ENCODE measurements at regions of chr7 and their contacts with region 1.

Region 1: DNA sequence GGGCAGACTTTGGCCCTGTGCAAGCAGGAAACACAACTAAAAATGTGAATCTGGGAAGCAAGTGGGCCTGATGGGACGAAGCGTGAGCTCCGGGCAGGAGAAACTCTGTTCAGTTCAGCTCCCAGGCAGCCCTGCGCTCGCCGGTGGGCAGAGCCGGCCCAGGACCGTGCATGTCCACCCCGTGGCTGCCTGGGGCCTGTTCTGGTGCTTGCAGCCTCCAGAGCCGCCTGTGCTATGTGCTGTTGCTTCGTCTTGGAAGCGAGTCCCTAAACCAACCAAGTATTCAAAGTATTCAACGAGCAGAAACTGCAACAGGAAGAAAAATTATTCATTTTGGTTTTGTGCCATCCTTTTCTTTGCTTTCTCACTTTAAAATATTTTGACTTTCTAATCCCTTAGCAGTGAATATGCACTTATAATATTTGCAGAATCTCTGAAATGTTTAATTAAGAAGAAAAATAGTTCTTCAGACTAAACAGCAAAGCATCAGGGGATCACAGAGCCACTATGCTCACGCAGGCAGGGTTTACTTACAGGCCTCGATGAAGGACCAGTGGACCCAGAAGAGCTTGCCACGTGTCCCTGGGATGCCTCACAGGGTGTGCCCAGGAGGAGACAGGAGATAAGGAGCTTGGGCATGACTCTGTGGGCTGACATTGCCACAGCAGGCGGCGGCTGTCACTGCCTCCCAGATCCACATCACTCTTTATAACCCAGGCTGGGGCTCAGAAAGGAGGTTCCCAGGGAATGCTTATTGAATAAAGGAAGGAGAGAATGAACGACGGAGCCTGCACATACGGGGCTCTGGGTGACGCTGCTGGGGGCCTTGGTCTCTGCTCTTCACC is 45.6 kb downstream of the VIPR2 start:
- DNase-seq: no peak
- ATAC-seq: no peak

Region 2: DNA sequence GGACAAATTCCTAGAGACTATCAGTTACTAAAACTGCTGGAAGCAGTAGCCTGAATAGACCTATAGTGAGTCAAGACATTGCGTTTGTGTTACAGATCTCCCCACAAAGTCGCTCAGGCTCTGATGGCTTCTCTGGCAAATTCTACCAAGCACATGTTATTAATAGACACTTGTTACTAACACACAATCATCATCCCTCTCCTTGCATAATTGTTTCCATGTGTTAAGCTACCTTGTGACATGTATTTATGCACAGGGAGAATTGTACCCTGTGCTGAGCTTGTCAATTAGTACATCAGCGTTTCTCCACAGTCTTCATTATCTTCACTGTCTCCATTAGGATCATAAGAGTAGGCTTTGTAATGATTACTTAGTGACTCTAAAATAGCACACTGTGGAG is 211.4 kb before region 1 on chr7:
- intact Hi-C with region 1: no loop called
- DNase-seq: no peak
- ATAC-seq: peak; percentile 87

Region 3: GRCh38 chr7:158950914-158951635 is 148.0 kb before region 1 on chr7:
- intact Hi-C with region 1: no loop called
- DNase-seq: no peak
- ATAC-seq: no peak

Region 4: DNA sequence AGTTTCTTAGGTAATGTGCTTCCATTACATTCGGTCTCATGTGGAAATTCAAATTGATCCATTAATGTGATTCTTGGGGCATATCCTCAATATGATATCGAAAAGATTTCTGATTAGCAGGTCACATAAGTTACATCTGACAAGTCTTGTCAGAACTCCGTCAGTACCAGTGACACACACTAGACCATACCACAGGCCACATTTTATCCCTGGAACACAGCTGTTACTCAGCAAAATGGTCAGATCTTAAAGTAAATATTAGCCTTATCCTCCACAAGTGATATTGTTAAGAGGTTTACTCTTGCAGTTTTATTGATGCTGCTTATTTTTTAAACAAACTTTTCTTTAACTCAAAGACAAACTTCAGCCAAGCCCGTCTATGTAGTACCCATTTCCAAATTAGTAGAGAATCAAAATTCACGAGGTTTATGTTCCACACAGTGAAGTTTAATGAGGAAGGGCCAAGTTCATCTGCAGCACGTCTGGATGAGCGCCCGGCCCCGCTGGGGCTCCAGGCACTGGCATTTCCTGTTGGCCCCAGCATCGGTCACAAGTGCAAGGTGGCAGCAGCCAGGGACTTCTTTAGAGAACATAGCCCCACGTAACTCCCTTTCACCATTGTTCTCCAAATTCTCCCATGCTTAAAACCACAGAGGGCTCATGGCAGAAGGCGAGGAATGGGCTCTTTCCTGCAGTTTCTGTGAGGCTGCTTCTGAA is 86.5 kb before region 1 on chr7:
- intact Hi-C with region 1: loop called (anchors 5 kb)
- DNase-seq: peak; percentile 87
- ATAC-seq: peak; percentile 41

Region 5: DNA sequence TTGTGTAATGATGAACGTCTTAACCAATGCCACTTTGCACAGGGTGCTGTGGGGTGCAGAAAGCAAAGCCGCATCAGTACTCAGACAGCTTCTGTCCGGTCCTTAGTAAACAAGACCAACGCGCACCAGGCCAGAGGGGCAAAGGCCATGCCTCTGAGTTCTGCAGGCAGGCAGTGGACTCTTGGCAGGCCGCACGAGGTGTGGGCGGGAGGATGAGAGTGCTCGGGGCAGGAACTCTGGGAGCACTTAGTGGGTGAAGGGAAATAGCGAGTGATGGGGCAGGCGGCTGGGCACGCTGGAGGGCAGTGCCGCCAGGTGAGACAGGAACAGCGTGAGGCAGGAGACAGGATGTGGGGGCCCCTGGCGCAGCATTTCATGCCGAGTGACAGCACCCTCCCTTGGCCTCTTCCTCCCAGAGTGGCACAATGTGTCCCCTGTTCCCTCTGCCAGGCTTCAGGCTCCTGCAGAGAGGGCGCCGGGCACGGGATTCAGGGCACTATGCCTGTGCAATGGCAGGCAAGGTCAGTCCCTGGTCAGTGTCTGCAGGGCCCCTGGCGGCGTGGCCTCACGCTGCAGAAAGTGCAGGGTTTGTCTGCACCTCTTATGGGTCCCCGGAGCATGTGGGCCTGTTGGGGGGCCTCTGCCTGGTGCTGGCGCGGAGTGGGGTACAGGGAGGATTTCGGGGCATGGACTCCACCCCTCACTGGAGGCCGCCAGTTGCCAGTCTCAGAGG is 14.8 kb before region 1 on chr7:
- intact Hi-C with region 1: loop called (anchors 1 kb)
- DNase-seq: no peak
- ATAC-seq: peak; percentile 95

Region 6: DNA sequence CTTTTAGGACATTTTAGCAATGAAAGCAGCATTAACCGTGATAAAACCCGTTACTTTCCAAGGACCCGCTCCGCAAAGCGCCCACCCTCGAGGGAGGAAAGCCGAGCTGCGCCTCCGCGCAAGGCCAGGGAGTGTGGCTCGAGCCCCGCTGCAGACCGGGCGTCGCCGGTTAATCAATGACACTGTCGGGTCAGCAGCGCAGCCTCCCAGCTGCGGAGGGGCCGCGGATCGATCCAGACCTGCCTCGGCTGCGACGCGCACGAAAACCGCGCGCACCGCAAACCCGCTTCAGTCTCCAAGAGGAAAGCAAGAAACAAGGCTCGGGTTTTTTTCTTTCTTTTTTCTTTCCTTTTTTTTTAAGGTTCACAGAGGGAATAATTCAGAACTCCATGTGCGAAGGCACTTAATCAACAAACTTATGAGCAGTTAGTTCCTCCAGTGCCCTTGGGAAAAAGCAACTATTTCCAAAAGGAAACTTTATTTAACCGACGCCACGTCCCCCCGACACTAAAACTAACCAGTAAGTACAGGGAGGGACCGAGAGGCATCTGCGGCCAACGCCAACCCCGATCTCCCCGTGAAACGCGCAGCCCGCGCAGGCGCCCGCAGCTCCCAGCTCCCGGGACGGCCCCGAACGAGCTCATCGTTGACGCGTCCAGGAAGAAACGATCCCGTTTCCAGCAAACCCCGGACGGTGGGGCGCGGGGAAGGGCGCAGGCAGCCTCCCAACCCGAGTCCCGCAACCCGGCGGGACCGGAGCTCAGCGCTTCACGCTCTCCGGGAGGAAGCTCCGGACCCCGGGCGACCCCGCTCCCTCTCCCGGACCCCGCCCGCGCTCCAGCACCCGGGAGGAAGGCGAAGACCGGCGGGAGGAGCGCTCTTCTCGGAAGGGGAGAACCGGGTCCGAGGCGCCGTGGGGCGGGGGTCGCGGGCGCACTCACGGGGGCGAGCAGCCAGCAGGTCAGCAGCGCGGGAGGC is 45.0 kb after region 1 on chr7:
- intact Hi-C with region 1: loop called (anchors 1 kb)
- DNase-seq: no peak
- ATAC-seq: peak; percentile 45

Region 7: DNA sequence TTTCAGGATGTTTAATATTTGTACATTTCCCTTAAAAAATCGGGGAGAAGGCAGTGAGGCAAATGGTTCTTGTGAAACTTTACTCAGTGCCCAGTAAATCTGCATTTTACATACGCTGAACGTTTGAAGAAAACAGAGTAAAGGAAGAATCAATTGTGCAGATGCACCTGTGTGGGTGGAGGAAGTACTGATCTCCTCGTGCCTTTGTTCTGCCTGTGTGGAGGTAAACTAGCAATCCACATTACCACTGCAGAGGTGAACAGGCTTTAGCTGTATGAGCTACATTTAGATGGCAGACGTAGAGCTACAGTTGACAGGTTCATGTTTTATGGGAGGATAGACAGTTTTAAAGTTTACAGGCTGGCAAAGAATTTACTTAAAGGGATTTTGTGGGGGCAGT is 108.4 kb after region 1 on chr7:
- intact Hi-C with region 1: no loop called
- DNase-seq: no peak
- ATAC-seq: no peak